Psoas muscle (tissue), 8 donors: ENCODE measurements at regions of chr10 and their contacts with region 1.

Region 1: DNA sequence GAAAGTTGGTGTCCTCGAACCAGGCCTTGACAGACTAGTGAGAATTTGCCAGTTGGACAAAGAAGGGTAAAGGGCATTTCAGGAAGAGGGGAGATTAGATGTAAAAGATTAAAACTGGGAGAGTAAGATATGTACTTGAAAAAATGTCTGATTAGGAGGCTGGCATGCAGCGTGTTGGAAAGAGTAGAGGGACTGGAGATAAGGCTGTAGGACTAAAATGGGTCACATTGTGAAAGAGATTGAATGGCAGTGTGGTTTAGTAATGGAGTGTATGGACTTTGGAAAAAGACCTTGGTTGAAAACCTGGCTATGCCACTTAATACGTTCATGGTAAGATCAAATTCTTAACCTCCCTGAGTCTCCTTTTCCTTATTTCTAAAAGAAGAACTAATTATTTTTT is 14.1 kb downstream of the CREM start:
- DNase-seq: no peak
- ATAC-seq: peak in 2 of 4 donors; percentile 39 to 47
- H3K4me3 ChIP-seq: no peak overlapping the region
- H3K27ac ChIP-seq: no peak overlapping the region
- H3K4me1 ChIP-seq: peaks cover 8% of the 10 kb centered on the region
- H3K27me3 ChIP-seq: no peaks in the 10 kb centered on the region
- CTCF ChIP-seq: no peak

Region 2: DNA sequence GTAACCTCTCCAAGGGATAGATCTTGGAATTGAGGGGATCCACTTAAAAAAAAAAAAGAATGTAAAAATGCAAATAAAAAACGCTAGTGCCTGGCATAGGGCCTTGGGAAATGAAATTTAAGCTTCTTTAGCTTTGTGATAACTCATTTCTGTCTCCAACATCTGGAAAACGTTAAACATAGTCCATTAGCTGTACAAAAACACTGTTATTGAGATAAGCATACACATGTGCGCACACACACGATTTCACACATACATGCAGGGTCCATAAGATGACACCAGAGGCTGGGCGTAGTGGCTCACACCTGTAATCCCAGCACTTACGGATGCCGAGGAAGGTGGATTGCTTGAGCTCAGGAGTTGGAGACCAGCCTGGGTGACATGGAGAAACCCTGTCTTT is 36.8 kb before region 1 on chr10:
- intact Hi-C with region 1: no loop called
- DNase-seq: no peak
- ATAC-seq: no peak
- H3K4me3 ChIP-seq: no peak overlapping the region
- H3K27ac ChIP-seq: no peak overlapping the region
- H3K4me1 ChIP-seq: no peaks in the 10 kb centered on the region
- H3K27me3 ChIP-seq: no peaks in the 10 kb centered on the region
- CTCF ChIP-seq: no peak

Region 3: GRCh38 chr10:35165136-35165535 is 24.4 kb after region 1 on chr10:
- intact Hi-C with region 1: no loop called
- DNase-seq: no peak
- ATAC-seq: no peak
- H3K4me3 ChIP-seq: no peak overlapping the region
- H3K27ac ChIP-seq: no peak overlapping the region
- H3K4me1 ChIP-seq: no peaks in the 10 kb centered on the region
- H3K27me3 ChIP-seq: no peaks in the 10 kb centered on the region
- CTCF ChIP-seq: no peak

Region 4: DNA sequence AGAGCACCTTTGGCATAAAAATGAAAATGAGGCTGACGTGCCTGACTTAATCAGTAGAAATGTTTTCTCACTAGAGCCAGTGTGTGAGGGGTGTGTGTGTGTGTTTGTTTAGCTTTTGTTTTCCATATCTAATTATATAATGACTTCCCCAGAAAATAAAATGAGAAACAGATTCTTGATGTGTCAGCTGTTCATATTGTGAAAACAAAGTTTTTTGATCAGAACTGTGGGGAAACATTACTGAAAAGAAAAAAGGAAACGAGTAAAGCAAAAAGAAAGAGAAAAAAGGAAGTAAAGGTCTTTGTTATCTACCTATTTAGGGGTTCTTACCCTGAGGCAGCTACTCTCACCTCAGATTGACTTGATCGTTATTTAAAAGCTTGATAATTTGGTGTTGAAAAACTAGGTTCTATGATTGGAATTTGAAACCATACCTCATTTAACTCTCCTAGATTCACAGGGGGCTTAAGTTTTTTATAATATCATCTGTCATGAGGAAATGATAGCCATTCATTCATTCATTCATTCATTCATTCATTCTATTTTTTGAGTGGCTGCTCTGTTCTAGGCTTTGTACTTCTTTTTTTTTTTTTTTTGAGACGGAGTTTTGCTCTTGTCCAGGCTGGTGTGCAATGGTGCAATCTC is 43.9 kb after region 1 on chr10:
- intact Hi-C with region 1: loop called in 1 of 2 experiments (anchors 5 kb)
- DNase-seq: no peak
- ATAC-seq: no peak
- H3K4me3 ChIP-seq: no peak overlapping the region
- H3K27ac ChIP-seq: no peak overlapping the region
- H3K4me1 ChIP-seq: no peaks in the 10 kb centered on the region
- H3K27me3 ChIP-seq: no peaks in the 10 kb centered on the region
- CTCF ChIP-seq: no peak

Region 5: DNA sequence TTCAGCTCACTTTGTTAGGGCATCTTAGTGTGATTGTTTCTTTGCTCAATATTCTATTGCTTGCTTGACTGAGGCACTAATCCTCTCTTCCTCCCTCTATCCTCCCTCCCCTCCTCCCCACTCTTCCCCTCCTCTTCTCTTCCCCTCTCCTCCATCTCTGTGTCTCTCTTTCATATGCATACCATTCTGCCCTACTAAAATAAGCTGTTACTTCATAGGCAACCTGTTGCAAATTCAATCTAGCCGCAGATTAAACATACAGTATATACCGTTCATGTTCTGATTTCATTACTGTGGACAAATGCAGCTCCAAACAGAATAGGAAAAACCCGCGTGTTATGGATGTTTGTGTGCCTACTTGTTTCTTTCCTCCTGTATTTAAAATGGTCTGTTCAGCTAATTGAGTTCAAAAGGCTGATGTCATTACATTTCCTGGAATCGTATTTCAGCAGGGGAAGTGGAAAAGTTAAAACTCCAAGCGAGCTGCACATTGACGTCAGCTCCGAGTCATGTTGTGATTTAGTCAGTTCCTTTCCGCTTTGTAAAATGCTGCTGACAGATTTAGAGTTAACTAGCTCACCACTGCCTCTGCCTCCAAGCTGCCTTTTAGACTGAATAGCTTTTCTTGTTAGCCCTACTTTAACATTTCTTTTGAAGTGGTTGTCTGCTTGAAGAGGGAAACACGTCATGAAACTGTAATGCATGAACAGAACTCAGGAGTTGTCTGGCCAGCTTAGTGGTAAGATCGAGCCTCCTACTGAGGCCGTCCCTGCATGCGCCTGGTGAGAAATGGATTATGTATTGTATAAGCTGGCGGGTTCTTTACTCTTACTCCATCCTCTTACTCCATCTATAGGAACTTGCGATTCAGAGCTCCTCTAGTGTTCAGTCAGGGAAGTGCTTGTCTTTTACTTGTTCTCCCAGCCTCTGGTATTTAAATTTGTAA is 54.9 kb after region 1 on chr10:
- intact Hi-C with region 1: loop called in 1 of 2 experiments (anchors 5 kb)
- DNase-seq: peak in 1 of 2 donors; percentile 48
- ATAC-seq: peak; percentile 84 to 91 (median 90)
- H3K4me3 ChIP-seq: peak overlapping the region; percentile 63
- H3K27ac ChIP-seq: peak overlapping the region; percentile 87
- H3K4me1 ChIP-seq: peaks cover 8% of the 10 kb centered on the region
- H3K27me3 ChIP-seq: no peaks in the 10 kb centered on the region
- CTCF ChIP-seq: peak; percentile 89